ENCODE measurements at regions of chr1 and their contacts with region 1.

Region 1: GRCh38 chr1:20337581-20337980 is 46.9 kb downstream of the VWA5B1 start:
- DNase-seq: no peak
- H3K4me3 ChIP-seq: no peak overlapping the region
- H3K27ac ChIP-seq: no peak overlapping the region
- H3K4me1 ChIP-seq: no peaks in the 10 kb centered on the region
- H3K27me3 ChIP-seq: peaks cover 17% of the 10 kb centered on the region
- CTCF ChIP-seq: no peak

Region 2: GRCh38 chr1:20361806-20362640 is 24.4 kb after region 1 on chr1:
- CTCF ChIA-PET with region 1: no interaction called
- POLR2A ChIA-PET with region 1: interaction called, 16 read pairs
- intact Hi-C with region 1: no loop called
- DNase-seq: peak; percentile 52
- H3K4me3 ChIP-seq: no peak overlapping the region
- H3K27ac ChIP-seq: no peak overlapping the region
- H3K4me1 ChIP-seq: peaks cover 4% of the 10 kb centered on the region
- H3K27me3 ChIP-seq: peaks cover 75% of the 10 kb centered on the region
- CTCF ChIP-seq: peak; percentile 85

Region 3: GRCh38 chr1:20682571-20683236 is 345.1 kb after region 1 on chr1:
- CTCF ChIA-PET with region 1: no interaction called
- POLR2A ChIA-PET with region 1: no interaction called
- intact Hi-C with region 1: no loop called
- DNase-seq: no peak
- H3K4me3 ChIP-seq: no peak overlapping the region
- H3K27ac ChIP-seq: no peak overlapping the region
- H3K4me1 ChIP-seq: no peaks in the 10 kb centered on the region
- H3K27me3 ChIP-seq: no peaks in the 10 kb centered on the region
- CTCF ChIP-seq: no peak

Measured in A673 (cell line).